ENCODE measurements at regions of chr12 and their contacts with region 1.

Region 1: GRCh38 chr12:90909069-90909770 is 45.8 kb downstream of the CCER1 start:
- DNase-seq: no peak
- H3K4me3 ChIP-seq: no peak overlapping the region
- H3K27ac ChIP-seq: no peak overlapping the region
- H3K4me1 ChIP-seq: no peaks in the 10 kb centered on the region
- H3K27me3 ChIP-seq: no peaks in the 10 kb centered on the region
- CTCF ChIP-seq: peak; percentile 46 to 63 (median 59)
- EP300 ChIP-seq: no peak
- POLR2A ChIP-seq: no peak

Region 2: DNA sequence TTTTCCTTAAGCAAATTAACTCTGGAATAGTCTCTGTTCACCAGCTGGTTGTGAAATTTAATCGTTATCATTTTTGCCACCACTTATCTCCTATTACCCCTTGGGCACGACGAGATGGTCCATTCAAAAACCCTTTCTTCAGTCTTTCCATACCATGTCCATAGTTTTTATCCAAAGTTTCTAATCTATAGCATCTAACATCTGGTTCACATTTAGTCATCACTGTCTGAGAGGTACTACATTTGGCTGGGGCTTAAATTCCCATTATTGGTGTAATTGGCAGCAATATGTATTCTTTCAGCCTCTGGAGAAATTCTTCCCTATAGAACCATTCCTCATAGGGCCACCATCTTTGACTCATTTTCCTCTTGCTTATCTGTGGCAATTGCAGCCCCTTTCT is 117.8 kb before region 1 on chr12:
- in situ Hi-C with region 1: no loop called
- intact Hi-C with region 1: no loop called
- DNase-seq: no peak
- H3K4me3 ChIP-seq: no peak overlapping the region
- H3K27ac ChIP-seq: no peak overlapping the region
- H3K4me1 ChIP-seq: no peaks in the 10 kb centered on the region
- H3K27me3 ChIP-seq: no peaks in the 10 kb centered on the region
- CTCF ChIP-seq: no peak
- EP300 ChIP-seq: no peak
- POLR2A ChIP-seq: no peak

Region 3: DNA sequence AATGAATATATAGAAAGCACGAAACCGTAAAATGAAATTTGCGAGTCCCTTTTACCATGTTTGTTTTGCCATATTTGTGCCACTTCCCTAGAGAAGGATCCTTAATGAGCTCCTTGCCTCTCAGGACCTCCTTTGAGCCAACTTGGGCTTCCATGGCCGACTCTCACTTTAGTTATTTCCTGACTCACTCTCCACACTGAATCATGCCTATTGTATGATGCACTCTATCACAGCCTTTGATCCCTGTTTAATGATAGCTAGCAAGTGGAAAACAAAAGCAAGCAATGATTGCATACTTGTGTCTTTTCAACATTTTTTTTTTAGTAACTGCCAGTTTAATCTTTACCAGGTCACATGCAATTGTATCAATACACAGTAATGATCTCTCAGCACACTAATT is 107.4 kb before region 1 on chr12:
- in situ Hi-C with region 1: loop called in 1 of 4 experiments (anchors 25 kb)
- intact Hi-C with region 1: no loop called
- DNase-seq: no peak
- H3K4me3 ChIP-seq: no peak overlapping the region
- H3K27ac ChIP-seq: no peak overlapping the region
- H3K4me1 ChIP-seq: no peaks in the 10 kb centered on the region
- H3K27me3 ChIP-seq: no peaks in the 10 kb centered on the region
- CTCF ChIP-seq: no peak
- EP300 ChIP-seq: no peak
- POLR2A ChIP-seq: no peak

Region 4: DNA sequence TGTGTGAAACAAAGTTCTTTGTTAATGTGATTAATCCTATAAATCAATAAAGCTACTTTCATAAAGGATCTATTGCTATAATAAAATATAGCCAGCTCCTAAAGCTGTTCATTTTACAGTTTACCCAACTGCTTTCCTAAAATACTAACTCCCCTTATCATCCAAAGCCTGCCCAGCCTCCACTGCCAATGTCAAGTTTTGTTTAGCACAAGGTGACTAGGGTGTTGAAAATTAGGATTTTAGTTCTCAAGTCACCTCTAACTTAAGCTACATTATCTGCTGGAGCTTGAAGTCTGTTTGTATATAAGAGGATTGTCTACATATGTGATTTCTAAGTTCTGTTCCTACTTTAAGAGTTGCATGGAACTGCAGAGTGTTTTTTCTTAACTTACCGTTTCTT is 40.6 kb before region 1 on chr12:
- in situ Hi-C with region 1: no loop called
- intact Hi-C with region 1: loop called (anchors 1 kb)
- DNase-seq: no peak
- H3K4me3 ChIP-seq: no peak overlapping the region
- H3K27ac ChIP-seq: no peak overlapping the region
- H3K4me1 ChIP-seq: no peaks in the 10 kb centered on the region
- H3K27me3 ChIP-seq: no peaks in the 10 kb centered on the region
- CTCF ChIP-seq: no peak
- EP300 ChIP-seq: no peak
- POLR2A ChIP-seq: no peak

Measured in transverse colon (tissue), 4 donors.